ENCODE measurements at regions of chr6 and their contacts with region 1.

Region 1: DNA sequence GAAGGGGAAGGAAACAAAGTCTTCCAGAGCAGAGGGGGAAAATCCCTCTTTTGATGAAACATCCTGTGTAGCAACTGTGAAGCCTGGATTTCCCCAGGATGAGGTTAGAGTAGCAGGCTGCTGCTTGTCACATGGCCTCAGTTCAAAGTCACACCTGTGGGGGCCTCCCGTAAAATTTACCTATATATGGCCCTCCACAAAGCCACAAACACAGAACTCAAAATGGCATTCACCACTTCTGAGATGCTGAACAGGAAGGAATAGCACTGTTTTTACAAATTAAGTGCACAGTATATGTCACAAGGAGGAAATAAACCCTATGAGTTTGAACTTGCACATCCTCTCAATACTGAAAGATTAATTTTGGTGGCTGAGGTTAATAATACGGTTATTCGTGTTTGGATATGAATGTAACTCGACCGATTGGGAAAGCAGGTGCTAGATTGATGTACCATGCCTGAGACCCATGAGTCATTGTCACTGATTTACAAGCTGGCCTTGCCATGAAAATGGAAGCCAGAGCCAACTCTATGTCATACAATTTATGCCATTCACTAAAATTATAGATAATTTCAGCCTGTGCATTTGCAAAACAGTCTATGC is 70.6 kb downstream of the SGK1 start:
- DNase-seq: peak; percentile 84
- ATAC-seq: peak; percentile 91
- H3K4me3 Mint-ChIP-seq: peak overlapping the region; percentile 16
- H3K27ac Mint-ChIP-seq: peak overlapping the region; percentile 94
- H3K4me1 Mint-ChIP-seq: peaks cover 56% of the 10 kb centered on the region
- H3K27me3 Mint-ChIP-seq: no peaks in the 10 kb centered on the region

Region 2: DNA sequence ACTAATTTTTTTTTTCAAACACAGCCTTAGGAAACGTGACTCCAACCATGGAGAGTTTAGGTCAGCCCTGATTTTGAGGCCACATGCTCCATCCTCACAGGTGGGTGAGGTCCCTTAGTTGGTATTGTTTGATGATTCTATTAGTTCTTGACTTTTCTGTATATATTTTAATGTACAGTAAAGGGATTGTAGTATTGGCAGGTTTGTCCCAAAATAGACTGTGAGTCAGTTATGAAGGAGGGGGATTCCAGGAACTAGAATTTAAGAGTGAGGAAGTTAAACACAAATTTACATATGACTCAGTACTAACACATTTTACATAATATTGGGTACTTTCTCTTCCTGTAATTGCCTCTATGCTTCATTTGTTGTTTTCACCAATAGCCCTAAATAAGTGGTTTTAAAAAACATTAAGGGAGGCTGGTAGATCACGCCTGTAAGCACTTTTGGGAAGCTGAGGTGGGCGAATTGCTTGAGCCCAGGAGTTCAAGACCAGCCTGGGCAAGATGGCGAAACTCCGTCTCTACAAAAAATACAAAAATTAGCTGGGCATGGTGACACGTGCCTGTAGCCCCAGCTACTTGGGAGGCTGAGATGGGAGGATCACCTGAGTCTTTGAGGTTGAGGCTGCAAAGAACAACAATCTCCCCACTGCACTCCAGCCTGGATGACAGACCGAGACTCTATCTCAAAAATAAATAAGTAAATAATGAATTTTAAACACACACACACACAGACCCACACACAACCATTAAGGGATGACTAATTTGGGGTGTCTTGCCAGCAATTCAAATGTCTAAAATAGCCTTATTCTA is 11.2 kb before region 1 on chr6:
- CTCF ChIA-PET with region 1: interaction called, 3 read pairs
- POLR2A ChIA-PET with region 1: interaction called, 4 read pairs
- intact Hi-C with region 1: loop called (anchors 1 kb)
- DNase-seq: peak; percentile 25
- ATAC-seq: peak; percentile 83
- H3K4me3 Mint-ChIP-seq: peak overlapping the region; percentile 35
- H3K27ac Mint-ChIP-seq: peak overlapping the region; percentile 77
- H3K4me1 Mint-ChIP-seq: peaks cover 41% of the 10 kb centered on the region
- H3K27me3 Mint-ChIP-seq: no peaks in the 10 kb centered on the region

Region 3: DNA sequence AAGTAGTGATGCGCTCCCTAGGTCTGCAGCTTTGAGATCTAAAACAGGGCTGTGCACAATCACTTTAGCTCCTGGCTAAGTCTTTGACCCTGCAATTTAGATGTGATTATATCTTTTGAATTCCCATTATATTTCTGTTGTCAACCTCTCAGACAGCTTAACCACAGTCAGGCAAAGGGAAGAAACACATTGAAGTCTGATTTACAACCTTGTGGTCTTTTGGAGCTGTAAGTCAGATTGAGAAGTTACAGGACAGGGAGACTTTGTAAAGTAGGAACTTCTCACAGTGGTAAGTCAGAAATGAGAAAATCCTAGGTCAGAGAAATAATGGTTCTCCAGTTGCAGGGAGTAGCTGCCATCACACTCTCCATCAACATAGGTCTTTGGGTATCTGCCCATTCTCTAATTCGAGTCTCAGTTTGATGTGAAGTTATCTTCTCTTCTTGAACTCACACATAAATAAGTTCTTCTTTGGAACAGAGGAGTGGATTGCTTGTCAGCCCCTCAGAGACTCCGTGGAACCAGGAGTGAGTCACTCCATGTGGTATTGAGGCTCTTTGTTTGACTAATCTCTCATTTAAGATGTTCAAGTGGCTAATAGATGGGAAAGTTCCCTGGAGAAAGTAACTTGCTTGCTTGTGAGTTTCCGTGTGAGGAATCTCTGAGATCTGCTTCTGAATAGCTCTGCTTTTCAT is 105.6 kb after region 1 on chr6:
- CTCF ChIA-PET with region 1: no interaction called
- POLR2A ChIA-PET with region 1: interaction called, 7 read pairs
- intact Hi-C with region 1: loop called in 1 of 2 experiments (anchors 10 kb)
- DNase-seq: peak; percentile 53
- ATAC-seq: peak; percentile 80
- H3K4me3 Mint-ChIP-seq: no peak overlapping the region
- H3K27ac Mint-ChIP-seq: no peak overlapping the region
- H3K4me1 Mint-ChIP-seq: peaks cover 27% of the 10 kb centered on the region
- H3K27me3 Mint-ChIP-seq: no peaks in the 10 kb centered on the region

Region 4: GRCh38 chr6:134373282-134373922 is 126.1 kb after region 1 on chr6:
- CTCF ChIA-PET with region 1: no interaction called
- POLR2A ChIA-PET with region 1: no interaction called
- intact Hi-C with region 1: loop called in 1 of 2 experiments (anchors 2 kb)
- DNase-seq: peak; percentile 45
- ATAC-seq: peak; percentile 78
- H3K4me3 Mint-ChIP-seq: no peak overlapping the region
- H3K27ac Mint-ChIP-seq: peak overlapping the region; percentile 39
- H3K4me1 Mint-ChIP-seq: peaks cover 21% of the 10 kb centered on the region
- H3K27me3 Mint-ChIP-seq: no peaks in the 10 kb centered on the region

Region 5: GRCh38 chr6:134436281-134436815 is 189.0 kb after region 1 on chr6:
- CTCF ChIA-PET with region 1: no interaction called
- POLR2A ChIA-PET with region 1: no interaction called
- intact Hi-C with region 1: loop called (anchors 1 kb)
- DNase-seq: peak; percentile 84
- ATAC-seq: peak; percentile 90
- H3K4me3 Mint-ChIP-seq: no peak overlapping the region
- H3K27ac Mint-ChIP-seq: peak overlapping the region; percentile 80
- H3K4me1 Mint-ChIP-seq: peaks cover 36% of the 10 kb centered on the region
- H3K27me3 Mint-ChIP-seq: no peaks in the 10 kb centered on the region

Region 6: DNA sequence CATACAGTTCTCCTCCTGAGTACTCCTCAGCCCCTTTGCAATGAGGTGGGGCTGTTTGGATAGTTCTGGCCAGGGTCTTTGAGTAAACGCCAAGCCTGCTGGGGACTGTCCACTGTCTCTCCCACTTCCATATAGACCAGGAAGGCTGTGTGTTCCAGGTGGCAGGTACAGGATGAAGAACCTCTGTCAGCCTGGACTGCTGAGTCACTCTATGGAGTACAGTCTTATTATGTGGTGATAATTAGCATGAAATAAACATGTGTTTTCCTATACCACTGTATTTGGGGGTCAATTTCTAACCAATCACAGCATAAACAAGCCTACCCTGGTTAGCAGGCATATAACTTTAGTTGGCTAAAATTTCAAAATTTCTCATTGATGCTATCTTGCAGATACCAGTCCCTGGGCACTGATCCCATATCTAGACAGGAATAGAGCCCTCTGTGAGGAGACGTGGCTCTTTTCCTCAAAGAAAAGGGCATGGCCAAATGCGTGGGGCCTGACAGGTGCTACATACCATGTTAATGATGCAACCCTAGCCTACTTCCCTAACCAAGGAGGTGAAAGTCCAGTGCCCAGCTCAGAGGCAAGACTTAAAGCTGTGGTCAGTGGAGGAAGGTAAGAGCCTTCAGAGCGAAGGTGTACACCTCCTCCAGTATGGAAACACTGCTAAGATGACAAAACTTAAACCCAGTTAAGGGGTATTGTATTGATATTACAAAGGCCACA is 707.1 kb after region 1 on chr6:
- CTCF ChIA-PET with region 1: no interaction called
- POLR2A ChIA-PET with region 1: no interaction called
- intact Hi-C with region 1: no loop called
- DNase-seq: no peak
- ATAC-seq: peak; percentile 24
- H3K4me3 Mint-ChIP-seq: no peak overlapping the region
- H3K27ac Mint-ChIP-seq: no peak overlapping the region
- H3K4me1 Mint-ChIP-seq: peaks cover 16% of the 10 kb centered on the region
- H3K27me3 Mint-ChIP-seq: no peaks in the 10 kb centered on the region